ENCODE measurements at regions of chr18 and their contacts with region 1.

Region 1: GRCh38 chr18:47930931-47931717 is 665 bp upstream of the SMAD2 start:
- DNase-seq: peak; percentile 89 to 95 (median 91)
- ATAC-seq: peak; percentile 89
- H3K4me3 ChIP-seq: peak overlapping the region; percentile 92
- H3K27ac ChIP-seq: peak overlapping the region; percentile 91
- H3K4me1 ChIP-seq: peaks cover 15 to 21% of the 10 kb centered on the region in 2 experiments
- H3K27me3 ChIP-seq: no peaks in the 10 kb centered on the region
- CTCF ChIP-seq: no peak
- EP300 ChIP-seq: no peak
- POLR2A ChIP-seq: peak; percentile 78
- RAD21 ChIP-seq: no peak

Region 2: DNA sequence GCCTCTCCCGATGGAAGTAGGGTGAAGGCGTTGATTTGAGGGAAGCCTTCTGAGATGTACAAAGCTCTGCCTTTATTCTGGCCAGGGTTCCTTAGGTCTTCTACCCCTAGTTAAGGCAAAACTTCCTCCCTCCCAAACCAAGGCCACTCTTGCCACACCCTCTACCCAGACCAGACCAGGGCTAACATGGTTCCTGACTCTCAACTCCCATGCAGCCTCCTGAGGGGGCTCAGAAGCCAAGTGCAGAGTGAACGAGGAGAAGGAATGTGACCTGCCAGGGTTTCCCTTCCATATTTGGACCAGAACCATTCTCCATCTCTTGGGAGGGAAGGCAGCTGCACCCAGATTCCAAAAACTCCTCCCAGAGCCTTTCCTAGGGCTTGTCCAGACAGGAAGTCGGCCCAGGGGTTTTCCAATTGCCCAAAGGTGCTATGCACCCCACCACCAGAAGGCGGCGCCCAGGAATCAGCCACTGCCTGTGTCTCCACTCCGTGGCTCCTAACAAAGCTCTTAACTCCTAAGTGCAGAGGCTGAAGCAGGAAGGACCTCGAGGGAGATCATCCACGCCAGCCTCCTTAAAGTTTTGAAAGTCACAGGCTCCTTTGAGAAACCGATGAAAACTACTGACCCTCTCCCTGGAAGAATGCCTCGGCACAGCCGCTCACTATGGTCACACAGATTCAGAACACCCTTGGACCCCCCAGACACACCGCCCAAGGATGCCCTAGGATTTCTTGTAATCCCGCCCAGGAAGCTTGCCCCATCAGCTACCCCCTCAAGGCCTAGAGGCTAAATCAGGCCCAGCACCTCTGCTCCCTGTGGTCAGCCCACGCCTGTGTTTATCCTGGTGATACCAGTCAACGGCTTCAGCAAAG is 158.5 kb before region 1 on chr18:
- CTCF ChIA-PET with region 1: no interaction called
- POLR2A ChIA-PET with region 1: interaction called, 3 read pairs
- in situ Hi-C with region 1: no loop called
- intact Hi-C with region 1: loop called (anchors 5 kb)
- DNase-seq: peak; percentile 47 to 65 (median 52)
- ATAC-seq: peak; percentile 89
- H3K4me3 ChIP-seq: no peak overlapping the region
- H3K27ac ChIP-seq: no peak overlapping the region
- H3K4me1 ChIP-seq: no peaks in the 10 kb centered on the region
- H3K27me3 ChIP-seq: peaks cover 0 to 4% of the 10 kb centered on the region in 2 experiments; a peak in 2 of 5 replicates
- CTCF ChIP-seq: peak; percentile 80 to 85 (median 81)
- EP300 ChIP-seq: no peak
- POLR2A ChIP-seq: no peak
- RAD21 ChIP-seq: peak; percentile 54 to 86

Region 3: DNA sequence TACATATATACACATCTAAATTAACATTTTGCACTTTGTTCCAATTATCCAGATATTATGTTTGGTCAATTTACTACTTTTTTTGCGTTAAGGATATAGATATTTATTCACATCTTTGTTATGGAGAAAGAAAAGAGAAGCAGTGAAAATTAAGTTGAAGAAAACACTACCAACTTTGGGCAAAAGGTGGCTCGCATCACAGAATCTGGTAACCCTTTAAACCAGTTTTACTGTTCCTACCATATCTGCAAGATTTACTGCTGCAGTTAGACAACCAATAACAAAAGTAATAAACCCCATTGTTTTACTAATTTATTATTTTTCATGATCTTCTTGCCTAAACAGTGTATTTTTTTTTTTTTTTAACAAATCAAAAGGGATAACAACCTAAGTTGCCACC is 54.3 kb before region 1 on chr18:
- CTCF ChIA-PET with region 1: no interaction called
- POLR2A ChIA-PET with region 1: no interaction called
- in situ Hi-C with region 1: no loop called
- intact Hi-C with region 1: no loop called
- DNase-seq: no peak
- ATAC-seq: no peak
- H3K4me3 ChIP-seq: no peak overlapping the region
- H3K27ac ChIP-seq: no peak overlapping the region
- H3K4me1 ChIP-seq: no peaks in the 10 kb centered on the region
- H3K27me3 ChIP-seq: no peaks in the 10 kb centered on the region
- CTCF ChIP-seq: no peak
- EP300 ChIP-seq: no peak
- POLR2A ChIP-seq: no peak
- RAD21 ChIP-seq: no peak

Region 4: GRCh38 chr18:47898696-47899095 is 32.4 kb before region 1 on chr18:
- CTCF ChIA-PET with region 1: no interaction called
- POLR2A ChIA-PET with region 1: interaction called, 5 read pairs
- in situ Hi-C with region 1: no loop called
- intact Hi-C with region 1: loop called (anchors 5 kb)
- DNase-seq: no peak
- ATAC-seq: no peak
- H3K4me3 ChIP-seq: no peak overlapping the region
- H3K27ac ChIP-seq: no peak overlapping the region
- H3K4me1 ChIP-seq: peaks cover 5 to 26% of the 10 kb centered on the region in 2 experiments; a peak in 4 of 5 replicates
- H3K27me3 ChIP-seq: no peaks in the 10 kb centered on the region
- CTCF ChIP-seq: no peak
- EP300 ChIP-seq: no peak
- POLR2A ChIP-seq: no peak
- RAD21 ChIP-seq: no peak

Region 5: GRCh38 chr18:47997338-47997780 is 66.2 kb after region 1 on chr18:
- CTCF ChIA-PET with region 1: interaction called, 3 read pairs
- POLR2A ChIA-PET with region 1: no interaction called
- in situ Hi-C with region 1: no loop called
- intact Hi-C with region 1: loop called (anchors 5 kb)
- DNase-seq: peak; percentile 28 to 47 (median 44)
- ATAC-seq: peak; percentile 69
- H3K4me3 ChIP-seq: no peak overlapping the region
- H3K27ac ChIP-seq: no peak overlapping the region
- H3K4me1 ChIP-seq: peaks cover 0 to 6% of the 10 kb centered on the region in 2 experiments; a peak in 4 of 5 replicates
- H3K27me3 ChIP-seq: no peaks in the 10 kb centered on the region; a peak in 1 of 5 replicates
- CTCF ChIP-seq: peak; percentile 58 to 72 (median 68)
- EP300 ChIP-seq: no peak
- POLR2A ChIP-seq: no peak
- RAD21 ChIP-seq: peak in 1 of 2 experiments; percentile 59; a peak in 2 of 4 replicates

Region 6: DNA sequence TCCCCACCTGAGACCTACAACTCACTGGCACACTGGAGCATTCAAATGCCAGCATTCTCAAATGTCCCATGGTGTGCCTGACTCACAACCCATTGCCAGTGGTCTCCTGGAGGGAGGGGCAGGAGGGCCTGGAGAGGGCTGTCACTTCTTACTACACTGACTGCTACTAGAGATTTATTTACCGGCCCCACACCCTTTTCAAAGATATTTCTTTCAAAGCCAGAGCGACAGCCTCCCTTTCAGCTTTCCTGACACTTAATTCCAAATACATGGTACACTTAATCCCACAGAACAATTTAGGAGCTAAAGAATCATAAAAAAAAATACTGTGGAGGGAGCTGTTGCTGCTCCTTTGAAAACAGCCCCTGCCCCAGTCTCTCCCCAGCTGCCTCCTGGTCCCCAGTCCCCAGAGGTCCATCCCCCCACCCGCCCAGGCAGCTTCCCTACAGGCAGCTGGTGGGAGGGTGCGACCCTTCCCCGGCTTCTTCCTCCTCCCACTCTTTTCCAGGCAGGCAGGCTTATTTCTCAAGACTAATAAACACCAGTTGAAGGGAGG is 128.4 kb after region 1 on chr18:
- CTCF ChIA-PET with region 1: no interaction called
- POLR2A ChIA-PET with region 1: no interaction called
- in situ Hi-C with region 1: no loop called
- intact Hi-C with region 1: no loop called
- DNase-seq: no peak
- ATAC-seq: no peak
- H3K4me3 ChIP-seq: no peak overlapping the region
- H3K27ac ChIP-seq: no peak overlapping the region
- H3K4me1 ChIP-seq: no peaks in the 10 kb centered on the region
- H3K27me3 ChIP-seq: peaks cover 2 to 32% of the 10 kb centered on the region in 2 experiments; a peak in 3 of 5 replicates
- CTCF ChIP-seq: no peak
- EP300 ChIP-seq: no peak
- POLR2A ChIP-seq: no peak
- RAD21 ChIP-seq: no peak

Measured in K562 (cell line).